MCF 10A (cell line): ENCODE measurements at regions of chr3 and their contacts with region 1.

Region 1: DNA sequence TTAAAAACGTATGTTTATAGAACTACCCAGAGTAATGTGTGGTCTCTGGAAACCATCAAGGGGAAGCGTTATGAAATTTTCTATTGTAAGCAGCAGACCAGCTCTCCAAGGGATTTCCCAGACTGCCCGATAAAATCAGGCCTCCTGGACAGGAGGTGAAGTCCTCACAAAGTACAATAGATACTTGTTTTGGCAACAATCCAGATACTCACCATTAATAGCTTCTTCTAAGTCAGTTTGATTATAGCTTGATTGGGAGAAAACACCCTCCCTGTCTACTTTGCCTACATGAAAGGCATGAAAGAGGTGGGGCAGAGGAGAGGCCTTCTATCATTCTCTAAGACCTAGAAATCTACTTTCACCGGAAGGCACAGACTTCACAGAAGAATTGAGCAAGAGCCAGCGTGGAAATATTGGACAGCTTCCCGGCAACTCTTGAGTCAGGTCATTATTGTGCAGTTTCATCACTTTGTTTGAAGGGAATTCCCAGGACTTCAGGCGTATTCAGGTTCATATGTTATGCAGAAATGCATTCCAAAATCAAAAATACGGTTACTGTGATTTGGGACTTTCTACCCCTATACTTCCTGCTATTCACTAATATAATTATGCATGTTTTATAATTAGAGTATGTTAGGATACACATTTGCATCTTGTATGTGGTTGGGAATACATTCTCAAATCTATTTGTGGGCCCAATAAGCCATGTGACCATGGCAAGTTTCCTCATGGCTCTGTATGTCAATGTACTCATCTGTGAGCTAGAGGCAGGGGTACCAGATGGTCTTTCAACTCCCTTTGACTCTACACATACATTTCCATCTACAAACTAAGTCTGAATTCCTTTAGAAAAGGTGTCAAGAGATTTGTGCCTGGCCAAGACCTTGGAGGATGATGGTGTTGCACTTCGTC is 103.5 kb downstream of the CD47 start:
- DNase-seq: peak; percentile 99
- H3K4me3 Mint-ChIP-seq: no peak overlapping the region
- H3K27ac Mint-ChIP-seq: peak overlapping the region; percentile 84
- H3K4me1 Mint-ChIP-seq: peaks cover 24% of the 10 kb centered on the region
- H3K27me3 Mint-ChIP-seq: no peaks in the 10 kb centered on the region
- CTCF ChIP-seq: no peak

Region 2: DNA sequence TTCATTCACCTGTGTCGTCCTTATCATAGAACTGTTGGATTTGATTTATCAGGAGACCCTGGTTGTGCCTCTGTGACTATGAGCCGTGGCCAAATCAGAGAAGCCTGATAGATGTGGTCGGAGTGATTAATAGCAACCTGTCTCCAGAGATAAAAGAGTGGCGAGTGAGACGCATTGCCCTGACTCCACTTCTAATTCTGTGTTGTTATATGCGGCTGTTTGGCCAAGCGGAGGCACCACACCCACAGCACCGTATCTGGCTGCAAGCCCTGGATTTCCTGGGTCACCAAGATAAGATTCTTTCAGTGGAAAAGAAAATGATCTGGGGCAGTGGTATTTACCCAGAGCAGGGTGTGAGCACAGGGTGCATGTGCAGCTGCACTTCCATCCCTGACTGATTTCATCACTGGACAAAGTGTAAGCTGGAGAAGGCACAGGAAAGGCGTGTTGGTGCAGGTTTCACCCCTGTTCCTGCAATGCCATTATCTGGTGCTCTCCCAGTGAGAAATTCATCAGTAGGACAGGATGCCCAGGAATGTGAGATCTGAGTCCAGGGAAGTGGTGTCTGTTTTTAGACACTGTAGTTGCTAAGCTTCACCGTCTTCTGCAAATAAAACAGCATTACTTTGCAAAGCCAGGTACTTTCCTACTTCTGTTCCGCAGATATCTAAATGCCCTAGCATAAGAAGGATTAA is 18.9 kb after region 1 on chr3:
- CTCF ChIA-PET with region 1: no interaction called
- POLR2A ChIA-PET with region 1: interaction called, 17 read pairs
- intact Hi-C with region 1: no loop called
- DNase-seq: peak; percentile 86
- H3K4me3 Mint-ChIP-seq: peak overlapping the region; percentile 24
- H3K27ac Mint-ChIP-seq: peak overlapping the region; percentile 9
- H3K4me1 Mint-ChIP-seq: peaks cover 25% of the 10 kb centered on the region
- H3K27me3 Mint-ChIP-seq: no peaks in the 10 kb centered on the region
- CTCF ChIP-seq: no peak